Right ventricle myocardium inferior (tissue), 1 donor: ENCODE measurements at regions of chr22 and their contacts with region 1.

Region 1: DNA sequence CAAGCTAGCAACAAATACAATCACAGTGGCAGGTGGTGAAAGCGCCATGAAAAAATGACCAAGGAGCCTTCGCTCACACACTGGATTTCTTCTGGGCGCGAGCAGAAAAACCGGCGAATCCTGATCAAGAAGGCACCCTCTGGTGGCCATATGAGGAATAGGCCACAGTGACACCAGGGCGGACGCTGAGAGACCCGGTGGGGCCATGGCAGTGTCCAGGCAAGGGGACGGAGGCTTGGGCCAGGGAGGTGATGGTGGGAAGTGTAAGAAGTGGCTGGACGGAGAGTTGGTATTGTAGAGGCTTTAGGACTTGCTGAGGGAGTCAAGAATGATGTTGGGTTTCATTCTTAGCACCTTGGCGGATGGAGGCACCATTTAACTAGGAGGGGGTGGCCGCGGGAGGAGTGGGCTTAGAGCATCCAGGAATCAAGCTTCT is 16.9 kb upstream of the RAC2 start:
- DNase-seq: peak; percentile 80
- ATAC-seq: peak; percentile 67

Region 2: DNA sequence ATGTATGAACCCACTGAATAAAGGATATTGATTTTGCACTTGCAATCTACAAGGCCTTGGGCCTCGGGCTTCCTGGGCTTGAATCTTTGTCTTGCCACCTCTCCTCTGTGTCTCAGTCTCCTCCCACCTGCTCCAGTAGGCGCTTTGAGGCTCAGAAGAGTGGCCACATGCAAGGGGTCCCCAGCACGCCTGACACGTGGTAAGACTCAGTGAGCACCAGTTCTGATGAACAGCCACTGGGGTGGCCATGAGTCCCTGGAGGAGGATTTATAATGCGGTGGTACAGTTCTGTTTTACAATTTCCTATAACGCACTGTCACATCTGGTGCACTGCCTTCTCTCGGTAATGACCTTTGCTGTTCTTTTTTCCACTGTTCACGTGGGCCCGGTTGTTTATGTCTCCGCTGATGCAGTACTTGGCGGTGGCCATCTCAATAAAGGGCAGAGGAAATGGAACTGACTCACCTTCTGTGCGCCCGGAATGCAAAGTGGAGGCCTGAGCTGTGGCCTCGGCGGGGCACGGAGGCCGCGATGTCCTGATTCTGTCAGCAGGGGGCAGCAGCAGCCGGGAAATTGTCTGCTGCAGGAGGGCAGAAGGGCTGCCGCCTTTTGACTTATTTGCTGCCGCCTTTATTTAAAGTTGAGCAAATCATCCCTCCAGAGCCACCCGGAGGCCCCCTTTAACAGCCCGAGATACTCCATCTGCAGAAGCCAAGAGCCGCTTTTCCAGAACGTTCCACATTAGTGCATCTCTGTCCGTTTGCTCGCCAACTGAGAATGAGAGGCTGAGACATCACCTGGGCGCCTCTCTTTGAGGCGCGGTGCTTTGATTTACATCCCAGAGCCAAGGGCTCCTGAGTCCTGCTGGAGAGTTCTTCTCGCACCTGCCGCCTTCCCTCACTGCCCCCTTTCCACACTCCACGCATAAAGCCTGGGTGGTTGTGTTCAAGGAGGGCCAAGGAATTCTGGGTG is 479.0 kb before region 1 on chr22:
- intact Hi-C with region 1: loop called (anchors 2 kb)
- DNase-seq: peak; percentile 87
- ATAC-seq: peak; percentile 85

Region 3: DNA sequence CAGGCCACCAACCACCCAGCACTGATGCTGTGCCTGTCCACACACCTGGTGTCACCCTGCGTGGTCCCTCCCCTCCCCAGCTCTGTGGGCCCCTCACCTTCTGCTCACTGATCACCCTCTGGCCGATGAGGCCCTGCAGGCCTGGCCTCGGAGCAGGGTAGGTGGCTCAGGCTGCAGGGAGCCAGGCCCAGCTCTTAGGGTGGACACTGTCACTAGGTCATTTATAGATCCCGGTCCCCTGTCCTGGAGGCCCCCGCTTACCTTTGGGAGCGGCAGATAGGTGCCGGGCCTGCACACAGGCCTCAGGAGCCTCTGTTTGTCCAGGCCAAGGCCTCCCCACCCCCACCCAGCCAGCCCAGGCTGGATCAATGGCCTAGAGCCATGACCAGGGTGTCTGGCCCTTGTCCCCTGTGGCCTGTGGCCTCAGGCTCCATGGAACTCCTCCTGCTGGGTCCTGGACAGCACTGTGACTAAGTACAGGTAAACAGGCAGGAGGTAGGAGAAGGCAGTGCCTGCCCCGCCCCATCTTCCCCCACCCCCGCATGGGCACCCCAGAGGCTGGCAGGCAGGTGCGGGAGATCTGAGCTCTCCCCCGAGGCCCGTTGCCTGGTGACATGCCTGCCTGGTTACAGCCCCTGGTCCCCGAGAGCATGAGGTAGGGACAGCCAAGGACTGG is 151.5 kb before region 1 on chr22 and contains the start of gene TMPRSS6:
- intact Hi-C with region 1: no loop called
- DNase-seq: no peak
- ATAC-seq: peak; percentile 15
- total RNA-seq, gene TMPRSS6: not detected

Region 4: GRCh38 chr22:37166675-37167066 is 94.2 kb before region 1 on chr22:
- intact Hi-C with region 1: loop called (anchors 2 kb)
- DNase-seq: peak; percentile 93
- ATAC-seq: peak; percentile 87

Region 5: DNA sequence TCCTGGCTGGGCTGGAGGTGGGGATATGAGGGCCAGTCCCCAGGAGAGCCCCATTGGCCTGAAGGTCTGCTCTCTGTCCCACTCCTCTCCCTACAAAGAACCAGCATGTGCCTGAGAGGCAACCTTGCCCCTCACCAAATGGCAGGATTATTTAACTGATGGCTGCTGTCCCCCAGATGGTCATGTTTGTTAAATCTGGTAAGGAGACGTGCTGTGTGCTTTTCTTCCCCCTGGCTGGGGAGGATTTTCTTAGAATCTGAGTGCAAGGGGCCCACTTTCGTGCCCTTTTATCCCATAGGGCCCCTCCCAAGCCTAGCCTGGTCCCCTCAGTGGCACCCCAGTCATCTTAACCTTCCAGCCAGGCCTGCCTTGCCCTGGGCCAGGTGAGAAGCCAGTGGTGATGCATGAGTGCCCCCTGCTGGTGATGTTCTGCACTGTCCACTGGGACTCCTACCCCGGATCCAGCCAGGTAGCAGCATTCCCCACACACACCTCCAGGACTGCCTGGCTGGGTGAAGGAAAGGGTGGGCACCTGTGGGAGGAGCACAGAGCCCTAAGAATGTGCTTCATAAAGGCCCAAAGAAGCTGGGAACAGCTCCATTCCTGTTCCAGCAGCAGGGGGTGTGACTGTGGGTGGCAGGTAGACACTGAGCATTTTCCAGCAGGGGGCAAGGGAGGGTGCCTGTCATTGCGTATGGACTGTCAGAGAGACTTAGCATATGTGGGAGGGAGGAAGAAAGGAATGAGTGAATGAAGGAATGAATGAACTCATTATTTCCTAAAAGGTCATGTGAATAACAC is 196.4 kb after region 1 on chr22:
- intact Hi-C with region 1: loop called (anchors 5 kb)
- DNase-seq: peak; percentile 76
- ATAC-seq: peak; percentile 72